CD4-positive, alpha-beta T cell (primary cell): ENCODE measurements at regions of chr2 and their contacts with region 1.

Region 1: DNA sequence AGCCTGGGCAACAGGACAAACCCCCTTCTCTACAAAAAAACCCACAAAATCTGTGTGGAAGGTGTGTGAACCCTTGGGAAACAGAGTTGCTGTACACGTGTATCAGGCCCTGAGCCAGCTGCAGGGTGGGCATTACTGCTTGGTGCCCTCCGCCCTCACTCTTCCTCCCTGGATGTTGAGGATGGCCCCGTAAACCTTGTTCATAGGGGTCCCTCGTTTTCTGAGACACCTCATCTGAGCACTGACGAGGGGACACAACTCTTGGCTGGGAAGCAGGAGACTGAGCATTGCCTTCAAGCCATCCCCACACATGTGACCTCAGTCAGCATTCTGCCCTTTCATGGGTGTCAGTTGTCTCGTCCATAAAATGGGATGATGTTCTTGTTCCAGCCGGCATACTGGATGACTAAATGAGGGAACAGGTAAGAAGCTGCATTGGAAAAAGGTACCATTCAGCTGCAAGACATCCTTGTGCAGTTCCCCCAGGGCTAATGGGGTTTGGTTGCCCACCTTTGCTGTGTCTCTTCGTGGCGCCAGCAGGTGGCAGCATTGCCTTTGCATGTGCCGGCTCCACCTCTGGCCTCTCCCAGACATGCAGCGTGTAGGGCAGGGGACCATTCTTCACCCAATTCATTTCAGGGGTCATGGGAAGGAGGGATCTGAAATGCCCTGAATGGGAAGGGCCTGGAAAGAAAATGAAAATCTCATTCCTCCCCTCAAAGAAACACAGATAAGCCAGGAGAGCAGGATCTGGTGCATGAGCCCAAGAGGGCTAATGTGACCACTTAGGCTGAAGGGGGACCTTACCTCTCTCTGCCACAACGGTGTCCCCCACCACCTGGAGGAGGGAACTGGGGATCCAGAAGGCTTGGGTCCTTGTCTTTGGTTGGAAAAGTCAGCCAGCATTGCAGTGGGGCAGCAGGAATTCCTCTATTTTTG is 36.4 kb upstream of the HAAO start:
- DNase-seq: peak; percentile 51 to 86 (median 60)
- ATAC-seq: peak; percentile 93
- H3K4me3 ChIP-seq: no peak overlapping the region
- H3K4me3 Mint-ChIP-seq: no peak overlapping the region
- H3K27ac ChIP-seq: no peak overlapping the region
- H3K27ac Mint-ChIP-seq: no peak overlapping the region
- H3K4me1 ChIP-seq: peaks cover 19% of the 10 kb centered on the region
- H3K4me1 Mint-ChIP-seq: peaks cover 18% of the 10 kb centered on the region
- H3K27me3 ChIP-seq: no peaks in the 10 kb centered on the region
- H3K27me3 Mint-ChIP-seq: peaks cover 6% of the 10 kb centered on the region
- CTCF ChIP-seq: peak; percentile 83

Region 2: DNA sequence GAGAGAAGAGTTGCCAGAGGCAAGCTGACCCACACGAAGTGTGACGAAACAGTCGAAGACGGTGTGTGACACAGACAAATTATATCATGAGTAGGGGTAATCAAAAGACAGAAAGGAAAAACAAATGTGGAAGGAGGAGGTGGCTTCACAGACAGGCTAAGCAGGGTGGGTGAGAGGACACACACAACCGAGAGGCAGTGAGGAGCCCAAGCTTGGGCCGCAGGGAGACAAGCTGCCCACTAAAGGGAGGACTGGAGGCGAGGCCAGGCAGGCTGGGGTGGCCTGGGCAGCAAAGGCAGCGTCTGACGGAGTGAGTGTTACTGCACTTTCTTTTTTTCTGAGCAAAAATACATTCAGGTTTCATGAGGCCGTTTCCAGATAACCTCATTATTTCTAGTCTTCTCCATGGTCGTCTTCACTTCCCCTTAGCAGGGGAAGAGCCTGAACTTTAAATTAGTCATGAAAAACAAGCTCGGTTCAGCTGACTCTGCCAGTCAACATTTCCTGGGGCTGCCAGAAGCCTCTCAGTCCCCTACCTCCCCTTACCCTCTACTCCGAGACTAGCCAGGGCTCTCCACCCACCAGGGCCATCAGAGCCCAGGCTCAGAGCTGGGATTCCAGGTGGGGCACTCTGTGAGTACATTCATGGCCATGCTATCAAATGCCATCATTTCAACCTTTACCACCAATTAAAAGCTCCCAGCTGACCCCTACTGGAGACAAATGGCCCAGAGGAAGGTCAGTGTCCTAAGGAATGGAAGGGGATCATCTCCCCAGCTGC is 411.4 kb after region 1 on chr2:
- CTCF ChIA-PET with region 1: no interaction called
- POLR2A ChIA-PET with region 1: no interaction called
- intact Hi-C with region 1: loop called in 1 of 2 experiments (anchors 10 kb)
- DNase-seq: peak in 1 of 14 experiments; percentile 33
- ATAC-seq: no peak
- H3K4me3 ChIP-seq: no peak overlapping the region
- H3K4me3 Mint-ChIP-seq: no peak overlapping the region
- H3K27ac ChIP-seq: no peak overlapping the region
- H3K27ac Mint-ChIP-seq: no peak overlapping the region
- H3K4me1 ChIP-seq: peaks cover 11% of the 10 kb centered on the region
- H3K4me1 Mint-ChIP-seq: peaks cover 7% of the 10 kb centered on the region
- H3K27me3 ChIP-seq: no peaks in the 10 kb centered on the region
- H3K27me3 Mint-ChIP-seq: no peaks in the 10 kb centered on the region
- CTCF ChIP-seq: no peak

Region 3: GRCh38 chr2:43484323-43484930 is 655.7 kb after region 1 on chr2:
- CTCF ChIA-PET with region 1: interaction called, 4 read pairs
- POLR2A ChIA-PET with region 1: no interaction called
- intact Hi-C with region 1: loop called (anchors 1 kb)
- DNase-seq: peak in 3 of 14 experiments; percentile 68 to 79 (median 76)
- ATAC-seq: no peak
- H3K4me3 ChIP-seq: no peak overlapping the region
- H3K4me3 Mint-ChIP-seq: no peak overlapping the region
- H3K27ac ChIP-seq: no peak overlapping the region
- H3K27ac Mint-ChIP-seq: no peak overlapping the region
- H3K4me1 ChIP-seq: no peaks in the 10 kb centered on the region
- H3K4me1 Mint-ChIP-seq: no peaks in the 10 kb centered on the region
- H3K27me3 ChIP-seq: no peaks in the 10 kb centered on the region
- H3K27me3 Mint-ChIP-seq: no peaks in the 10 kb centered on the region
- CTCF ChIP-seq: peak; percentile 75

Region 4: GRCh38 chr2:43542285-43542937 is 713.7 kb after region 1 on chr2:
- CTCF ChIA-PET with region 1: interaction called, 3 read pairs
- POLR2A ChIA-PET with region 1: no interaction called
- intact Hi-C with region 1: loop called (anchors 1 kb)
- DNase-seq: peak in 3 of 14 experiments; percentile 63 to 68 (median 65)
- ATAC-seq: peak; percentile 89
- H3K4me3 ChIP-seq: no peak overlapping the region
- H3K4me3 Mint-ChIP-seq: no peak overlapping the region
- H3K27ac ChIP-seq: no peak overlapping the region
- H3K27ac Mint-ChIP-seq: no peak overlapping the region
- H3K4me1 ChIP-seq: peaks cover 3% of the 10 kb centered on the region
- H3K4me1 Mint-ChIP-seq: peaks cover 16% of the 10 kb centered on the region
- H3K27me3 ChIP-seq: no peaks in the 10 kb centered on the region
- H3K27me3 Mint-ChIP-seq: no peaks in the 10 kb centered on the region
- CTCF ChIP-seq: peak; percentile 78

Region 5: DNA sequence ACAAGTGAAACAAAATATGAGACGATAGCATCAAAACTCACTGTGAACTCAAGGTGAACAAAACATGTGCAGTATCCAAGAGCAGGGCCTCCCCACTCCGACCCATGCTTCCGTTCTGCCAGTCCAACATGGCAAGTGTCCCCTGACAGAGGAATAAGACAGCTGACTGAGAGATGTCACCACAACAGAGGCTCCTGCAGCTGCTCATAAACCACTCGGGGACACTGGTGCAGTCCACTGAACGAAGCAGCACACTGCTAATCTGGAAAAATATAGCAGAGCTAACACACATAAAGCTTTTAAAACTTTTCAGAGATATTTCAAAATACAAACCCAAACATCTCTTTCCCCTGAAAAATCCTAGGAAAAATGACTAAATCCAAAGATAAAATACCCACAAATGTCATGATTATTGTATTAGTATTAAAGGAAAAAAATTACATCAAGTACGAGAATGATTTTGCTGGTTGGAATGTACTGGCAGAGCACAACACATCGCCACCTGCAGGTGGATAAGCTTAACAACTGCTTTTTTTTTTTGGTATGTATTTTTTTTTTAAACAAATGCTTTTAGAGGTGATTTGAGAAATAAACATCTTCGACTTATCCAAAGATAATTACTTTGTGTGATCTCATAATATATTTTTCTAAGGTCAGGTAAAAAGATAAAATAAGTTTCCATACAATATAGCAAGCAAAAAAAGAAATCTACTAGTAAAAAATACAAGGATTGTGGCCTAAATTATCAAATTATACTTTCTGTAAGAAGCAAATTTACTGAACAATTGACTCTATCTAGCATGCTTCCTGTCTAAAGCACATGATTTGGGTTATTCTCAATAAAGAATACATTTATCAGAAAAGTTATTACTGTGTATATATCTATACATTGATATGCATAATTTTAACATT is 748.5 kb after region 1 on chr2:
- CTCF ChIA-PET with region 1: interaction called, 4 read pairs
- POLR2A ChIA-PET with region 1: no interaction called
- intact Hi-C with region 1: loop called (anchors 1 to 2 kb)
- DNase-seq: peak in 8 of 14 experiments; percentile 12 to 76 (median 34)
- ATAC-seq: no peak
- H3K4me3 ChIP-seq: no peak overlapping the region
- H3K4me3 Mint-ChIP-seq: no peak overlapping the region
- H3K27ac ChIP-seq: no peak overlapping the region
- H3K27ac Mint-ChIP-seq: no peak overlapping the region
- H3K4me1 ChIP-seq: peaks cover 4% of the 10 kb centered on the region
- H3K4me1 Mint-ChIP-seq: peaks cover 23% of the 10 kb centered on the region
- H3K27me3 ChIP-seq: no peaks in the 10 kb centered on the region
- H3K27me3 Mint-ChIP-seq: no peaks in the 10 kb centered on the region
- CTCF ChIP-seq: peak; percentile 92

Region 6: GRCh38 chr2:43611987-43612894 is 783.5 kb after region 1 on chr2:
- CTCF ChIA-PET with region 1: no interaction called
- POLR2A ChIA-PET with region 1: no interaction called
- intact Hi-C with region 1: loop called (anchors 1 to 2 kb)
- DNase-seq: peak; percentile 52 to 85 (median 64)
- ATAC-seq: peak; percentile 96
- H3K4me3 ChIP-seq: no peak overlapping the region
- H3K4me3 Mint-ChIP-seq: no peak overlapping the region
- H3K27ac ChIP-seq: no peak overlapping the region
- H3K27ac Mint-ChIP-seq: no peak overlapping the region
- H3K4me1 ChIP-seq: no peaks in the 10 kb centered on the region
- H3K4me1 Mint-ChIP-seq: no peaks in the 10 kb centered on the region
- H3K27me3 ChIP-seq: no peaks in the 10 kb centered on the region
- H3K27me3 Mint-ChIP-seq: peaks cover 4% of the 10 kb centered on the region
- CTCF ChIP-seq: peak; percentile 80